ENCODE measurements at regions of chr14 and their contacts with region 1.

Region 1: GRCh38 chr14:69346710-69347109 is 51.4 kb downstream of the ERH start:
- DNase-seq: peak; percentile 19
- H3K4me3 ChIP-seq: no peak overlapping the region
- H3K27ac ChIP-seq: no peak overlapping the region
- H3K4me1 ChIP-seq: no peaks in the 10 kb centered on the region
- H3K27me3 ChIP-seq: peaks cover 3 to 8% of the 10 kb centered on the region in 2 experiments
- CTCF ChIP-seq: peak; percentile 70 to 84
- POLR2A ChIP-seq: no peak

Region 2: GRCh38 chr14:69242311-69243224 is 104.1 kb before region 1 on chr14:
- CTCF ChIA-PET with region 1: interaction called, 78 read pairs
- POLR2A ChIA-PET with region 1: no interaction called
- dilution Hi-C with region 1: no loop called
- intact Hi-C with region 1: loop called (anchors 1 kb)
- DNase-seq: peak; percentile 71
- H3K4me3 ChIP-seq: no peak overlapping the region
- H3K27ac ChIP-seq: no peak overlapping the region
- H3K4me1 ChIP-seq: no peaks in the 10 kb centered on the region
- H3K27me3 ChIP-seq: no peaks in the 10 kb centered on the region
- CTCF ChIP-seq: peak; percentile 59 to 60
- POLR2A ChIP-seq: no peak

Region 3: DNA sequence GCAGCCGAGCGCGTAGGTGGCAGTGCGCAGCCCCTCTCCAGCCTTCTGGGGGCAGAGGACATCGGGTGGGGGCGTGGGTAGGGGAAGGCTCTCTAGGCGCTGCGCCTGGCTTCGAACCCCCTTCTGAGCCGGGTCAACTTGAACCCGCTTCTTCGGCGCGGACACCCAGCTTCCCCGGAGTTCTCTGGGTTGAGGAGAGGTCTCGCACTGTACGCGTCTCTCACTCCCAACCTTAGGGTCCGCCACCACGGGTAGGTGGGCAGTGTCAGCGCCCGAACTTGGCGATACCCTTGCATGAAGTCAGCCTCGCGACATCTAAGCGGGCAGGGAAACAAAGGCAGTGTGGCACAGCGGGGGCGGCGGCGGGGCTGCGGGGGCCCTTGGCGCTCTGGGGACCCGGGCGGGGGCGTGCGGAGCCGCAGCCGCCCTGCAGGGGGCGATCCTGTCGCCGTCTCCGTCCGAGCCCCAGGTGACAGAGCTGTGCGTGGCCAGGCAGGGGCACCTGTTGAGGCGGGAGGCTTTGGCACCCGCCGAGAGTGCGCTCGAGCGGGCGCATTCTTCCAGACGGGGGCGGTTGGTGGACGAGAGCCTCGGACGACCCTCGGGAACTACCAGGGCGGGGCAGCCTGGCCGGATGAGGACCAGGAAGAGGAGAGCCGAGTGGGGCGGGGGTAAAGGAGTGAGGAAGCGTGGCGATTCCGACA is 85.7 kb before region 1 on chr14:
- CTCF ChIA-PET with region 1: interaction called, 13 read pairs
- POLR2A ChIA-PET with region 1: no interaction called
- dilution Hi-C with region 1: no loop called
- intact Hi-C with region 1: loop called (anchors 1 kb)
- DNase-seq: no peak
- H3K4me3 ChIP-seq: peak overlapping the region; percentile 38 to 45 (median 39)
- H3K27ac ChIP-seq: no peak overlapping the region
- H3K4me1 ChIP-seq: peaks cover 12% of the 10 kb centered on the region
- H3K27me3 ChIP-seq: peaks cover 28 to 30% of the 10 kb centered on the region in 2 experiments
- CTCF ChIP-seq: peak; percentile 47 to 72
- POLR2A ChIP-seq: no peak

Region 4: DNA sequence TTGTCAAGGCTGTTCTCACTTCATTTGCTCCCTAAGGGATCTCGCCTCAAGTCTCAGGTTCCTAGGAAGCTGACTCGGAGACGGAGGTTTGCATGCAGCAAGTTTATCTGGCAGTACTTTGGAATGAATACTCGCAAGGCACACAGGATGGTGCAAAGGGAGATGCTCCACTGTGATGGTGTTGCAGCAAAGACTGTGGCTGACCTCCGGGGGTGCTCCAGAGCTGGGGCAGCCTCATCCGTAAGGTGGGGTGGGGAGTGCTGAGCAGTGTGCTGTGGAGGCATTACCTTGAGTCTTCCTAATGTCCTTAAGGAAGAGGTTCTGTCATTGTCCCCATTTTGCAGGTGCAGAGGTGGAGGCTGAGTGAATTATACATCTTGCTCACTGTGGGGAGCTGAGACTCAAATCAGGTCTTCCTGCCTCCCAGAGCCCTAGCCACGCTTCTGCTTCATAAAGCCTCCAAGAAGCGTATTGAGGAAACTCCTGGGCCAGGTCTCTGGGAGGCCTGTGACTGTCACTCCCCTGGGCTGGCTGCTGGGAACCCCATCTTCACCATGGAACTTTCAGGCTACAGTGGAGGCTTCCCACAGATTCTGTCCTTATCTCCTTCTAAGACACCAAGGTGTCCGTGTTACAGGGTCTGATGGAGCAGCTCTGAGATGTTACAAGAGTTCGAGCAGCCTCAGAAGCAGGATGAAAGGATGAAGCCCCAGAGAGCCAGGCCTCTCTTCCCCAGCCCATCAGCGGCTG is 47.2 kb before region 1 on chr14:
- CTCF ChIA-PET with region 1: interaction called, 10 read pairs
- POLR2A ChIA-PET with region 1: no interaction called
- dilution Hi-C with region 1: no loop called
- intact Hi-C with region 1: no loop called
- DNase-seq: no peak
- H3K4me3 ChIP-seq: no peak overlapping the region
- H3K27ac ChIP-seq: no peak overlapping the region
- H3K4me1 ChIP-seq: no peaks in the 10 kb centered on the region
- H3K27me3 ChIP-seq: peaks cover 26 to 35% of the 10 kb centered on the region in 2 experiments
- CTCF ChIP-seq: peak in 1 of 2 donors; percentile 19
- POLR2A ChIP-seq: no peak

Region 5: GRCh38 chr14:69363055-69363454 is 16.3 kb after region 1 on chr14:
- CTCF ChIA-PET with region 1: interaction called, 18 read pairs
- POLR2A ChIA-PET with region 1: no interaction called
- dilution Hi-C with region 1: no loop called
- intact Hi-C with region 1: no loop called
- DNase-seq: no peak
- H3K4me3 ChIP-seq: no peak overlapping the region
- H3K27ac ChIP-seq: no peak overlapping the region
- H3K4me1 ChIP-seq: no peaks in the 10 kb centered on the region
- H3K27me3 ChIP-seq: peaks cover 0 to 2% of the 10 kb centered on the region in 2 experiments
- CTCF ChIP-seq: peak in 1 of 2 donors; percentile 17
- POLR2A ChIP-seq: no peak

Region 6: DNA sequence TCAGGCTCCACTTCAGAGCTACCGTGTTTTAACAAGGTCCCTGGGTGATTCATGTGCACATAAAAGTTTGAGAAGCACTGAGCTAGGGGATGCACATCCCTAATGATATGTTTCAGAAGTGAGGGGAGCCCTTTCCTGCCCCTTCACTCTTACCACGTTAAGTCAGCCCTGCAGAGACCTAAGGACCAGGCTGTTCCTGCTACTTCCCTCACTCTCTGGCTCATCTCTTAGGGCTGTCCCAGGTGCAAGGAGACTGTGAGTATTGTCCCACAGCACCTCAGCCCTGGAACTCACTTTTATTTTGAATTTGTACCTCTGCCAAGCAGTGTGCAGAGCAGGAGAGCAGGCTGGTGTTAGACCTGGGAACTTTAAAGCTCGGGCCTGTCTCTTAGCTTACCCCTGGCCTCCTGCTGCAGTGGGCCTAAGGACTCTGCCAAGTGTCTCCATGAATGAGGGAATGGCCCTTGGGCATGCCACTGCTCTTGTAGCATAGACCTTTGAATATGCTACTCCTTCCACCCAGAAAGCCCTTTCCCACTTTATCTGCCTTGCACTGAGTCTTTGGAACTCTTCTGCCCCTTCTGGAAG is 253.7 kb after region 1 on chr14:
- CTCF ChIA-PET with region 1: no interaction called
- POLR2A ChIA-PET with region 1: no interaction called
- dilution Hi-C with region 1: no loop called
- intact Hi-C with region 1: no loop called
- DNase-seq: no peak
- H3K4me3 ChIP-seq: no peak overlapping the region
- H3K27ac ChIP-seq: no peak overlapping the region
- H3K4me1 ChIP-seq: no peaks in the 10 kb centered on the region
- H3K27me3 ChIP-seq: no peaks in the 10 kb centered on the region
- CTCF ChIP-seq: no peak
- POLR2A ChIP-seq: no peak

Measured in endothelial cell of umbilical vein (primary cell).